Mucosa of descending colon (tissue), 3 donors: ENCODE measurements at regions of chr9 and their contacts with region 1.

Region 1: GRCh38 chr9:36166101-36166927 is 2.9 kb upstream of the CCIN start:
- DNase-seq: peak; percentile 86 to 93 (median 87)
- ATAC-seq: peak; percentile 99
- H3K4me3 ChIP-seq: no peak overlapping the region
- H3K4me1 ChIP-seq: peaks cover 7% of the 10 kb centered on the region
- CTCF ChIP-seq: peak; percentile 91

Region 2: DNA sequence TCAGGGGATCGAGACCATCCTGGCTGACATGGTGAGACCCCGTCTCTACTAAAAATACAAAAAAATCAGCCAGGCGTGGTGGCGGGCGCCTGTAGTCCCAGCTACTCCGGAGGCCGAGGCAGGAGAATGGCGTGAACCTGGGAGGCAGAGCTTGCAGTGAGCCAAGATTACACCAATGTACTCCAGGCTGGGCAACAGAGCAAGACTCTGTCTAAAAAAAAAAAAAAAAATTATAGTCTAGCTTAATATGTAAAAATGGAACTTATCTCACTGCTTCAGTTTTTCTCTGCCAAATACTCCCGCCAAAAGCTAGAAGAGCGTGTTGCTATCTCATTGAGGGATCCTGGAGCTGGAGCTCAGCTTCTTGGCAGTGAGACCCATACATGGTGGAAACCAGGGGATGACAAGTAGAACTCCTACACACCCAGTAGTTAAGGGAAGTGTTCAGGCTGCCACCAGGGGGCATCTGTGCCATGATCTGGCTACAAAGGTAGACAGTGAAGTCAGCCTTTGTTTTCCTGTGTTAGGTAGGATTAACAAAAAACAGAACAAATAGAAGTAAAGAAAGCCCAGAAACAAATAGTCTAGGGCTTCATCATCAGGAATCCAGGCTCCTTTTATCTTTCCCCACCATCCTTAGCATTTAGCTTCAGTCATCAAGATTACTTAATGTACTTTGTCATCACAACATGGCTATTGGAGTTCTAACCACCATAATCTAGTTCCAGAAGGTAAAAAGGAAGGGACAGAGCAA is 63.4 kb before region 1 on chr9:
- intact Hi-C with region 1: loop called (anchors 5 kb)
- DNase-seq: peak; percentile 83 to 95 (median 91)
- ATAC-seq: peak; percentile 100
- H3K4me3 ChIP-seq: no peak overlapping the region
- H3K4me1 ChIP-seq: no peaks in the 10 kb centered on the region
- CTCF ChIP-seq: peak; percentile 39